Left colon (tissue), 2 donors: ENCODE measurements at regions of chr5 and their contacts with region 1.

Region 1: GRCh38 chr5:172106511-172107356 is 81.3 kb downstream of the STK10 start:
- DNase-seq: peak in 1 of 2 donors; percentile 63
- ATAC-seq: peak; percentile 38

Region 2: GRCh38 chr5:171709918-171710317 is 396.8 kb before region 1 on chr5:
- intact Hi-C with region 1: no loop called
- DNase-seq: no peak
- ATAC-seq: no peak

Region 3: DNA sequence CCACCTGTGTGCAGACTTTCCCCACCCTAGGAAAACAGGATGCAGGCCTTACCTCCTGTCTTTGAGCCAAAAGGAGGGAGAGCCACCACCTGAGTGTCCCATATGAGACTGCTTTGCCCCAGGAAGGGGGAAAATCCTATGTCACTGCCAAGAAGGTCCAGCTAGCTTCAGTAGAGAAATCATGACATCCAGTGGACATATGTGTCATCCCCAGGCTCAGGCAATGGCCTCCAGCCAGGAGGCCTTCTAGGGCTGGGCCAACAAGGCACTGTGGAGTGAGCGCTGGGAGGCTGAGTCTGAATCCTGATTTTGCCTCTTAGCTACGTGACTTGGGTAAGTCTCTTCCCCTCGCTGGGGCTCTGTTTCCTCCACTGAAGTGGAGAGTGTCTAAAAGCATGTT is 260.9 kb before region 1 on chr5:
- intact Hi-C with region 1: no loop called
- DNase-seq: no peak
- ATAC-seq: peak; percentile 59

Region 4: GRCh38 chr5:171924493-171925122 is 182.1 kb before region 1 on chr5:
- intact Hi-C with region 1: no loop called
- DNase-seq: no peak
- ATAC-seq: no peak

Region 5: GRCh38 chr5:172144291-172144815 is 37.6 kb after region 1 on chr5:
- intact Hi-C with region 1: no loop called
- DNase-seq: peak in 1 of 2 donors; percentile 45
- ATAC-seq: peak; percentile 44

Region 6: DNA sequence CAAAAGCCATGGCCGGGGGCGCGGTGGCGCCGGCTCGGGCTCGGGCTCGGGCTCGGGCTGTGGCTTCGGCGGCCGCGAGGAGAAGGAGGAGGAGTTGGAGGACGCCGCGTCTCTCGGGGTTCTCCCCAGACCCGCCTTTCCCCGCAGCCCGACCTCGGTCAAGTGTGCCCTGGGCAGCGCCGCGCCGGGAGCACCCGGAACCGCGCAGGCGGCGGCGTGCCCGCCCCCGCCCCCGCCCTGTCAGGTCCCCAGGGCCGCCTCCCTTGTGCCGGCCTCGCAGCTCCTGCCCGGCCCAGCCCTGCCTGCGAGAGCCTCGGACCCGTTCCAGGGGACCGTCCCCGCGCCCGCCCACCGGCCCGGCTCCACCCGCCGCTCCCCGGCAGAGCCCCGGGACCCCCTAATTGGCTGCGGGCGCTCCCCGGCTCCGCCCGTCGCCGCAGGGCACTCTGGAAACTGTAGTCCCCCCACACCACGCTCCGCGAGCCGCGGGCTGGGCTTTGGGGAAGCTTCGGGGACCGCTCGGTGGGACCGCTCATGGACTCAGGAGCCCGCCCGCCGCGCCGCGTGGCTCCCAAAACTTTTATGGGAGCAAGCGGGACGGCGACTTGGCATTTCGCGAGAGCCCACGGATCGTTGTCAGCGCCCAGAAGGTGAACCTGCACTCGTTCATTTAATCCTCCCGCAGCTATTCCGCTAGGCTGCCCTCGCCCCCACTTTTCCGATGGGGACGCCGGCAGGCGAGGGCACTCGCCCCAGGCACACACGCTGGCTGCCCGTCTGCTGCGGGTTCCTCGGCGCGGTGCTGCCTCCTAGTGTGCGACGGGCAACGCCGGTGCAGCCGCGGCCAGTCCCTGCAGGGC is 81.5 kb after region 1 on chr5 and contains the start of gene STK10:
- intact Hi-C with region 1: loop called (anchors 5 to 10 kb)
- DNase-seq: peak; percentile 92
- ATAC-seq: peak; percentile 83
- total RNA-seq, gene STK10: 32.6 to 35.7 TPM

Region 7: DNA sequence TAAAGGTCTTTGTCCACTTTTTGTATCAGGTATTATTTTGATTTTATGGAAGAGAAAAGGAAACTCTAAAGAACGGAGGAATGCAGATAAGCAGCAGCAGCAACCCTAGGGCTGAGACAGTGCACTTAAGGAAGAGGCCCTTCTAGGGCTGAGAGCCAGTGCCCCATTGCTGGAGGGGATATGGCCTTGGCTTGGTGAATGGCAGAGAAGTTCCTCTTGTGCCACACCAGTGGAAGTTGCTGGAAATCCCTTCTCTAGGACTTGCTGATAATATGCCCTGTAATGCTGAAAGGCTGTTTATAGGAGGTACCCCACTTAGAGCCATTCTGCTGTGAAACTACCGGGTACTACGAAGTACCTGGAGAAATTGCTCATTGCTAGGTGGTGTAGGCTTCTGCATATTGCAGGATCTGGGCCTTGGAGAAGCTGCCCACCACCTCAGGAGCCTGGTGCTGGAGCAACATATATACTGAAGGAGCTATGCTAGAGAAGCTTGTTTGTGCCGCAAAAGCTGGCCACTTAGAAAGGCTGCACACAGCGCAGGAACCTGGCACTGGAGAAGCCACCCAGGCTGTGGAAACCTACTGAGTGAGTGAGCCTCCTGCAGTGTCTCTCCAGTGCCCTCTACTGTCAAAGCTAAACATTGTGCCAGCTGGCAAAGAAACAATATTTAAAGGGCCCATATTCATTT is 186.5 kb after region 1 on chr5:
- intact Hi-C with region 1: loop called in 1 of 2 experiments (anchors 5 kb)
- DNase-seq: peak; percentile 51 to 54
- ATAC-seq: peak; percentile 99